Posterior vena cava (tissue), 2 donors: ENCODE measurements at regions of chr17 and their contacts with region 1.

Region 1: DNA sequence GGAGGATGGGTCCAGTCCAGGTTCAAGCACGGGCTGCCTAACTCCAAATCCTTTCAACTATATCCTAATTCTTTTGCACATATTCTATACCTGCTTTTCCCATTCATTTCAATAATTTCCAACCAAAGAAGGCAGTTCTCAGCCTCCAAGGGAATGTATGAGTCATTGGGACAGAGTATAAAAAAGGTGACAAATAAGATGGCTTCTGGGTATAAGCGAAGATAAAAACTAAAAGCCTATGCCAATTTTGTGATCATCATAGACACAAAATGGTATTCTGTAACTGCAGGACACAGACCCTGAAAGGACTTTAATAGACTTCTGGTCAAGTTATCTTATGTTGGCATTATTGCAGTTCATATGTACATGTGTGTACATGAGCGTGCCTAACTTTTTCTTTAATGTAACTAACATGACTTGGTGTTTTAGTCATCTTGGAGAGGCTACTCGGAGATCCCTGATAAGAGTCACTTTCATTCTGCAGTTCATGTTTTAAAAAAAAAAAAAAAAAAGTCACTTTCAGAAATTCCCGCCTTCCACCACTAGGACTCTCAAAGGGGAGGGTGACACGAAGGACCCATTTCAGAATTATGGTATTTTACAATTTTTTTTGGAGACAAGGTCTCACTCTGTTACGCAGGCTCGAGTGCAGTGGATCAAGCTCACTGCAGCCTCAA is 17.3 kb downstream of the COG1 start:
- DNase-seq: no peak

Region 2: DNA sequence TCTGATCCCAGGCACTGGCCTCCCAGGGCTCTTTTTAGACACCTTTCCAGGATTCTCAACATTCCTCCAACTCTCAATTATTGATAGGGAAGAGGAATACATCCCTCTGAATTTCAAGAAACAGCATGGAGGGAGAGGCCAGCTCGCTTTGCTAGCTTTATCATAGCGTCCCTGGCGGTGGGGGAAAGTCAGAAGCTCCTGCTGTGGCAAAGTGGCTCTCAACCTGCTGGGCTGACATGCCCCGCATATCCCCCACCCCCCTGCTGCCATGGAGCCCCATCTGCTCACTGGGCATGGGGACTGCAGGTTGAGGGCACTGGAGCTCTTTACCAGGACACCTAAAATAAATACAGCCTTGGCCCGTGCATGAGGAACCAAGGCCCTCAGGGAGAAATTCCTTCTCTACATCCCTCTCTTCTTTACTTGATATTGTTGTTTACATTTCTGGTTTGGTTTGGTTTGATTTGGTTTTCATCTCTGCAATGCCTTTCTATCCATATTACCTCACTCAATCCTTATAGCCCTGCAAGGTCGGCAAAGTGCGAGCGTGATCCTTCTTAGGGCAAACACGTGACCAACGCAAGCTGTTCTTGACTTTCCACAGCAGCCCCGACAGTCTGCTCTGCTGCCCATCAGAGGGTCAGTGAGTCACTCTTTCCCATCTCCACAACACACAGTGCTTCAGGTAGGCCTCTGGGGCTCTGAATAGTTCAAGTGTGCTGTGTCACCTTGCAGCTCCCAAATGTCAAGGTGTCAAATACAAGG is 257.7 kb before region 1 on chr17:
- intact Hi-C with region 1: no loop called
- DNase-seq: no peak

Region 3: DNA sequence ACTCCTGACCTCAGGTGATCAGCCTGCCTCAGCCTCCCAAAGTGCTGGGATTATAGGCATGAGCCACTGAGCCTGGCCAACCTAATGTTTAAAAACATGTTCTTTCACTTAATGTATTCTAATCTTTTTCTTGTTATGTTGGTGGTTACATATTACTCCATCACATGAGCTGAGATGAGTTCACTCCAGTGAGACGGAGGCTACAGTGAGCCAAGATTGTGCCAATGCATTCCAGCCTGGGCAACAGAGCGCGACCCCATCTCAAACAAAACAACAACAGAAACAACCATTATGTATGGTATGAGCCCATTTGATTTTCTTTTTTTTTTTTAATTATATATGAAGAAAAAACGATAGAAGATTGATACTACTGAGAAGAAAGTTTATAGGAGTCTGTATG is 157.2 kb before region 1 on chr17:
- intact Hi-C with region 1: loop called in 1 of 2 experiments (anchors 5 kb)
- DNase-seq: no peak

Region 4: GRCh38 chr17:73197161-73197560 is 13.0 kb before region 1 on chr17:
- intact Hi-C with region 1: loop called in 1 of 2 experiments (anchors 1 kb)
- DNase-seq: no peak